CD4-positive, alpha-beta T cell (primary cell): ENCODE measurements at regions of chr1 and their contacts with region 1.

Region 1: GRCh38 chr1:24970399-24970753 is 40.3 kb upstream of the RUNX3 start:
- DNase-seq: no peak
- ATAC-seq: no peak
- H3K4me3 ChIP-seq: no peak overlapping the region
- H3K4me3 Mint-ChIP-seq: no peak overlapping the region
- H3K27ac ChIP-seq: no peak overlapping the region
- H3K27ac Mint-ChIP-seq: no peak overlapping the region
- H3K4me1 ChIP-seq: peaks cover 55% of the 10 kb centered on the region
- H3K4me1 Mint-ChIP-seq: peaks cover 61% of the 10 kb centered on the region
- H3K27me3 ChIP-seq: no peaks in the 10 kb centered on the region
- H3K27me3 Mint-ChIP-seq: no peaks in the 10 kb centered on the region
- CTCF ChIP-seq: no peak

Region 2: GRCh38 chr1:24984800-24985522 is 14.6 kb after region 1 on chr1:
- CTCF ChIA-PET with region 1: interaction called, 7 read pairs
- POLR2A ChIA-PET with region 1: interaction called, 8 read pairs
- intact Hi-C with region 1: loop called in 1 of 2 experiments (anchors 1 kb)
- DNase-seq: peak in 7 of 14 experiments; percentile 35 to 83 (median 57)
- ATAC-seq: peak; percentile 54
- H3K4me3 ChIP-seq: no peak overlapping the region
- H3K4me3 Mint-ChIP-seq: peak overlapping the region; percentile 6
- H3K27ac ChIP-seq: no peak overlapping the region
- H3K27ac Mint-ChIP-seq: peak overlapping the region; percentile 19
- H3K4me1 ChIP-seq: peaks cover 95% of the 10 kb centered on the region
- H3K4me1 Mint-ChIP-seq: peaks cover 93% of the 10 kb centered on the region
- H3K27me3 ChIP-seq: no peaks in the 10 kb centered on the region
- H3K27me3 Mint-ChIP-seq: no peaks in the 10 kb centered on the region
- CTCF ChIP-seq: no peak

Region 3: GRCh38 chr1:24996983-24997893 is 26.9 kb after region 1 on chr1:
- CTCF ChIA-PET with region 1: interaction called, 3 read pairs
- POLR2A ChIA-PET with region 1: interaction called, 3 read pairs
- intact Hi-C with region 1: loop called in 1 of 2 experiments (anchors 1 kb)
- DNase-seq: peak in 3 of 14 experiments; percentile 25 to 63 (median 45)
- ATAC-seq: no peak
- H3K4me3 ChIP-seq: no peak overlapping the region
- H3K4me3 Mint-ChIP-seq: peak overlapping the region; percentile 22
- H3K27ac ChIP-seq: no peak overlapping the region
- H3K27ac Mint-ChIP-seq: peak overlapping the region; percentile 70
- H3K4me1 ChIP-seq: peaks cover 75% of the 10 kb centered on the region
- H3K4me1 Mint-ChIP-seq: peaks cover 82% of the 10 kb centered on the region
- H3K27me3 ChIP-seq: no peaks in the 10 kb centered on the region
- H3K27me3 Mint-ChIP-seq: no peaks in the 10 kb centered on the region
- CTCF ChIP-seq: no peak